ENCODE measurements at regions of chr18 and their contacts with region 1.

Region 1: DNA sequence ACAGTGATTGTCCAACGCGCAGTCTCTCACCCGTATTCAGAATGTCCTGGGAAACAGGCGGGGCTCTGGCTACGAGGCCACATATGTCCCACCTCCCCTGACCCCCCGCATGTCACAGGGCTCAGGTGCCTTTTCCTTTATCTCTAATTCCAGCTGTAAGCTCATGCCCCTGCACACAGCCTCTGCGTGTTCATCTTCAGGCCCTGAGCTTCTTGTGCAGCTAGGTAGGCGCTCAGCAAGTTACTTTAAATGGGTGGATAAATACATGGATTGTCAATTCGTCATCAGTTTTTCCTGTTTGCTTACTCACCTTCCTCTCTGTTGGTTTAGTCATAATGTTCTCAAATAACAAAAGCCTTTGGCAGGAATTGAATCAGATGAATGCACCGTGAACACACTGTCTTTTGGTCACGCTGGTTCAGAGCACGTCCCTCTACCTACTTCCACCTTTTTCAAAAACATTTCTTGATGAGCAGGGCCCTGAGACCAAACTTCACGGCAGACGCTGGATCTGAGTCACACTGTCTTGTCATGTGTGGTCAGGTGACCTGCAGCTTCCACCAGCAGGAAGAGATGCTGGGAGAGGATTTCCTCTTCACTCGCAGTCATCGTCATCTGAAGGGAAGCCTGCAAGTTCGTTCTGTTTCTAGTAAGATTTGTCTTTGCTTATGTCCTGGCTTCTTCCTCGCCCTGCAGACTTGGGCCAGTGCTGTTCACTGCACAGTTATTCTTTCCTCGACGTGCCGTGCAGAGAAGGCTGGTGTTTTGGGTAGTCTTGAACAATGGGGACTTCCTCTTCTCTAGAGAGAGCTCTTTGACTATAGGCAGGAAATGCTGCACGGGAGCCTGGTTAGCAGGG is 138.1 kb downstream of the PTGR3 start:
- DNase-seq: peak; percentile 67
- ATAC-seq: peak; percentile 83
- H3K4me3 ChIP-seq: peak overlapping the region; percentile 28 to 64 (median 52)
- H3K4me3 Mint-ChIP-seq: peak overlapping the region; percentile 85
- H3K27ac ChIP-seq: peak overlapping the region; percentile 76 to 84
- H3K27ac Mint-ChIP-seq: peak overlapping the region; percentile 93
- H3K4me1 ChIP-seq: peaks cover 20 to 21% of the 10 kb centered on the region in 2 donors
- H3K4me1 Mint-ChIP-seq: peaks cover 30% of the 10 kb centered on the region
- H3K27me3 ChIP-seq: no peaks in the 10 kb centered on the region
- H3K27me3 Mint-ChIP-seq: no peaks in the 10 kb centered on the region
- CTCF ChIP-seq: no peak

Region 2: DNA sequence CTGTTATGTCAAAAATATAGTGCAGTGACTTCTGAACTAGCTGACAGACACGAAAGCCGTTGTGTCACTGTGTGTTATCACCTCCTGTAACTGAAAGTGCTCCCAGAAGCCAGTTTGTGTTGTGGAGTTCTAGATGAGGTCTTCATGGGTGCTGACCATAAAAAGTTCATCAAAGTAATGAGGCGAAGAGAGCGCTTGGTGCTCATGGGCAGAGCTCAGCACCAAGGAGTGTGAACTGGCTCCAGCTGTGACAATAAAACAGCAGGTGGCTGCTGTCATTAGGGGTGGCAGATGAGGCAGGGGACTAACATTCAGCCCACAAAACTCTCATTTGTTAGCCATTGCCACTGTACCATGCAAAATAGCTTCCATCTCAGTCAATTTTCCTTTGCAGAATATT is 322.0 kb before region 1 on chr18:
- CTCF ChIA-PET with region 1: no interaction called
- POLR2A ChIA-PET with region 1: no interaction called
- intact Hi-C with region 1: no loop called
- DNase-seq: no peak
- ATAC-seq: no peak
- H3K4me3 ChIP-seq: no peak overlapping the region
- H3K4me3 Mint-ChIP-seq: no peak overlapping the region
- H3K27ac ChIP-seq: no peak overlapping the region
- H3K27ac Mint-ChIP-seq: no peak overlapping the region
- H3K4me1 ChIP-seq: no peaks in the 10 kb centered on the region
- H3K4me1 Mint-ChIP-seq: no peaks in the 10 kb centered on the region
- H3K27me3 ChIP-seq: no peaks in the 10 kb centered on the region
- H3K27me3 Mint-ChIP-seq: no peaks in the 10 kb centered on the region
- CTCF ChIP-seq: no peak

Region 3: DNA sequence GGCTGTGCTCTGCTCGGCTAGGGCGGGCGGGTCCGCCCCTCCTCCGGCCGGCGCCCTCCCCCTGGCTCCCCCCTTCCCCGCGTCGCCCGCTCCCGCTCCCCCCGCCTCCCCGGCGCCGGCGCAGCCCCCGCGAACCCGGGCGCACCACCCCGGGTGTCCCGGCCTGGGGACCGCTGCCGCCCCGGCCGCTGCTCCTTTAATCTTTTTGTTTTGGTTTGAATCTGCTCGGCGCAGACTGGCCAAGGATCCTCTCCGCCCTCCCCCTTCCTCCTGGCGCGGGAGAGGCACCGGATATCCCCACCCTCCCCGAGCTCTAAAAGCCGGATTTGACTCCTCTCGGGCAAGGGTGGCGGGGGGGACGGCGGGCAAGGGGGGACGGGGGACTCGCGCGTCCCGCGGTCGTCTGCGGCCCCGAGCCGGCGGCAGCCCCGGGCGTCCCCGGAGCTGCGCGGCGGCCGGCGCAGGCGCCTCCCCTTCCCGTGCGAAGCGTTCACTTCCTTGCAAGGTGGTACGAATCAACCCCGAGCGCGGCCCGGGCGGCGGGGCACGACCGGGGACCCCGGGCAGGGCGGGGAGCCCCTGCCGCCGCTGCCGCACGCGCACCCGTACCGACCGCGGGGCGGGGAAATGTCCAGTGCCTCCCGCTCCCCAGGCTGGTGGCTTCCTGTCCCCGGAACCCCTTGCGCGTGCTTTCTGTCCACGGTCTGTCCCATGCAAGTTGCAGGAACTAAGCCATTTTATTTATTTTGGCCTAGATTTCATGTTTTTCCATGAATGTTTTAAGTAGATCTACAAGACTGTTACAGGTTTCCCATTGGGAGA is 138.5 kb after region 1 on chr18 and contains the start of gene PTGR3:
- CTCF ChIA-PET with region 1: no interaction called
- POLR2A ChIA-PET with region 1: interaction called, 3 read pairs
- intact Hi-C with region 1: loop called (anchors 2 kb)
- DNase-seq: peak; percentile 81
- ATAC-seq: peak; percentile 60
- H3K4me3 ChIP-seq: peak within 1 kb of the TSS; percentile 73 to 90 (median 84)
- H3K4me3 Mint-ChIP-seq: peak within 1 kb of the TSS; percentile 98
- H3K27ac ChIP-seq: peak within 1 kb of the TSS; percentile 51 to 80
- H3K27ac Mint-ChIP-seq: peak within 1 kb of the TSS; percentile 93
- H3K4me1 ChIP-seq: peaks cover 35 to 44% of the 10 kb centered on the region in 2 donors
- H3K4me1 Mint-ChIP-seq: peaks cover 59% of the 10 kb centered on the region
- H3K27me3 ChIP-seq: peaks cover 0 to 5% (median 2%) of the 10 kb centered on the region in 4 experiments
- H3K27me3 Mint-ChIP-seq: peaks cover 21% of the 10 kb centered on the region
- CTCF ChIP-seq: no peak
- total RNA-seq, gene PTGR3: 30.2 and 32.6 TPM in 2 replicates

Region 4: DNA sequence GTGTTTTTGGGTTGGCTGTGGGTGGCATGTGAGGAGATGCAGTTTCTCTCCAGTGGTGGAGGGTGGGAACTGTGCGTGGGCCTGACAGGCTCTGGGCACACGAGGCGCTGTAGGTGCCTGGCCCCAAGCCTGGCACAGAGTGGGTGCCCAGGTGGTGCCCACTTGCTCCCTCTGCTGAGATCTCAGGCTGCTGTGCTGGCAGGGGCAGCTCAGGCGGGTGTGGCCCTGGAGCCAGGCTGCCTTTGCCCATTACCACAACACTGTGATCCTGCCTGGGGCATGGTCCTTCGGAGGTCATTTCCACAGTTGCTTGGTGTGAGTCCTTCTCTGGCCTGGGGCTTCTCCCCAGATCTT is 160.2 kb after region 1 on chr18:
- CTCF ChIA-PET with region 1: no interaction called
- POLR2A ChIA-PET with region 1: no interaction called
- intact Hi-C with region 1: no loop called
- DNase-seq: no peak
- ATAC-seq: no peak
- H3K4me3 ChIP-seq: no peak overlapping the region
- H3K4me3 Mint-ChIP-seq: no peak overlapping the region
- H3K27ac ChIP-seq: no peak overlapping the region
- H3K27ac Mint-ChIP-seq: no peak overlapping the region
- H3K4me1 ChIP-seq: peaks cover 5 to 12% of the 10 kb centered on the region in 2 donors
- H3K4me1 Mint-ChIP-seq: peaks cover 15% of the 10 kb centered on the region
- H3K27me3 ChIP-seq: no peaks in the 10 kb centered on the region
- H3K27me3 Mint-ChIP-seq: no peaks in the 10 kb centered on the region
- CTCF ChIP-seq: no peak

Measured in B cell (primary cell).